AG04449 (cell line): ENCODE measurements at regions of chr19 and their contacts with region 1.

Region 1: GRCh38 chr19:13069415-13070359 is 33.0 kb downstream of the LYL1 start:
- DNase-seq: no peak
- H3K4me3 ChIP-seq: no peak overlapping the region
- CTCF ChIP-seq: no peak

Region 2: DNA sequence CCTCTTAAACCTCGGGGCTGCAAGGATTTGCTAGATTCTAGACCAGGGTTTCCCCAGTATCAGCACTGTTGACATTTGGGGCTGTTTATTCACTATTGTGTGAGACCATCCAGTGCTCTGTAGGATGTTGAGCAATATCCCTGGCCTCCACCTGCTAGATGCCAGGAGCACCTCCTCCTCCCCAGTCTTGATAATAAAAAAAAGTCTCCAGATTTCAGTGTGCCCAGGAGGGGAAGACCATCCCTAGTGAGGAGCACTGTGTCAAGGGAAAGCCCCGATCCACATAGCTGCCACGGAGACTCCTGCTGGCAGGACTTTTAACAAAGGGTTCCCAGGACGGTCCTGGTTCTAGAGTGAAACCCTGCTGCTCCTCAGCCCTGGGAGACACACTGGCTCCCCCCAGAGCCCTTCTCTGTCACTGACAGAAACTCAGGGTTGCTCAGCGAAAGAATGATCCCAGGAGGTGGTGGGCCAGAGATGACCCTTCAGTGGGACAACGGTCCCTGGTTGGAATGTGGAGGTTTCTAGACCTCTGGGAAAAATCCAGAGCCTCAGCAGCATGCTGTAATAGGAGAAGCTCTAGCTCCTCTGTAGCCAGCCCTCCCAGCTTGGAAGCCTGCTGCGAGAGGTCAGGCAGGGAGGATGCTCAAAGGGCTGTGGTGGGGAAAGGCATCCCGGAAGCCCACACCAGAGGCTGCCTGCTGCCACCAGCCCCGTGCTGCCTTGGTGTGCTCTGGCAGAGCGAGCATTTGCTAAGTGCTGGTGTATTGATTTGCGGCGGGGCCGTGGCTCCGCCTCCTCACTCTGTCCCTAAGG is 12.7 kb after region 1 on chr19:
- CTCF ChIA-PET with region 1: interaction called, 550 read pairs
- POLR2A ChIA-PET with region 1: no interaction called
- DNase-seq: no peak
- H3K4me3 ChIP-seq: no peak overlapping the region
- CTCF ChIP-seq: peak; percentile 58